ENCODE measurements at regions of chr12 and their contacts with region 1.

Region 1: GRCh38 chr12:1795785-1796514 is 24.4 kb upstream of the LRTM2 start:
- DNase-seq: peak; percentile 95
- H3K4me3 Mint-ChIP-seq: peak overlapping the region; percentile 82
- H3K27ac Mint-ChIP-seq: peak overlapping the region; percentile 79
- H3K4me1 Mint-ChIP-seq: peaks cover 18% of the 10 kb centered on the region
- H3K27me3 Mint-ChIP-seq: no peaks in the 10 kb centered on the region

Region 2: DNA sequence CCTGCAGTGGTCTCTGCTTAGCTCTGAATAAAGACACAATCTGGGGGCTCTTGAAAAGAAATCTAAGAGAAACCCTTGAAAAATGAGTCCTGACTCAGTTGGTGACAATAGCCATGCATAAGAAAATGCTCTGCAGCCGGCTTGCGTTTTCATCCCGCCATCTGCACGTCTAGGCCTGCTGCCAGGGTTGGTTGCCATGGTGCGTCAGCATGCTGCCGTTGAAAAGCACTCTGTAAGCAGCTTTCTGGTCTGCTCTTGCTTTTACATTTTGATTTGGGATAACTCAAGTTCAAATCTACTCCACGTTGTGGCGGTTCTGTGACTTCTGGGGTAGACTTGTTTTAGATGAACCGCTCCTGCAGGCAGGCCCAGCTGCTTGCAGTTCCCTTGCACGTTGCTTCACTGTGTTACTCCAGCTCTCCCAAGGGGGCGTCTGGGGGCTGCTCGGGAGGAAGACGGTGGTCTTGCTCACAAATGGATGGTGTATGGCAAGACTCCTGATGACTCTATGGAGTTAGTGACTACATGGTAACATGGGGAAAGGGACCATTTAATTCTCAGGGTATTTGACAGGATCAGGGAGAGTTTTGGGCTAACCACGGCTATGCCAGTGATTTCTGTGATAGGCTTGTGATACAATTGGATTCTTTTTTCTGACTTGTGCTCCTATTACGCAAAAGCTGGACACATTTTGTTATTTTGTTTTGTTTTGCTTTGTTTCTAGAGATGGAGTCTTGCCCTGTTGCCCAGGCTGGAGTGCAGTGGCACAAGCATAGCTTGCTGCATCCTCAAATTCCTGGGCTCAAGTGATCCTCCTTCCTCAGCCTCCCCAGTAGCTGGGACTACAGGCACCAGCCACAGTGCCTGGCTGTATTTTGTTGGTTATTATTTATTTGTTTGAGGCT is 151.2 kb before region 1 on chr12:
- CTCF ChIA-PET with region 1: interaction called, 282 read pairs
- POLR2A ChIA-PET with region 1: interaction called, 5 read pairs
- DNase-seq: no peak
- H3K4me3 Mint-ChIP-seq: no peak overlapping the region
- H3K27ac Mint-ChIP-seq: no peak overlapping the region
- H3K4me1 Mint-ChIP-seq: peaks cover 32% of the 10 kb centered on the region
- H3K27me3 Mint-ChIP-seq: peaks cover 19% of the 10 kb centered on the region

Region 3: DNA sequence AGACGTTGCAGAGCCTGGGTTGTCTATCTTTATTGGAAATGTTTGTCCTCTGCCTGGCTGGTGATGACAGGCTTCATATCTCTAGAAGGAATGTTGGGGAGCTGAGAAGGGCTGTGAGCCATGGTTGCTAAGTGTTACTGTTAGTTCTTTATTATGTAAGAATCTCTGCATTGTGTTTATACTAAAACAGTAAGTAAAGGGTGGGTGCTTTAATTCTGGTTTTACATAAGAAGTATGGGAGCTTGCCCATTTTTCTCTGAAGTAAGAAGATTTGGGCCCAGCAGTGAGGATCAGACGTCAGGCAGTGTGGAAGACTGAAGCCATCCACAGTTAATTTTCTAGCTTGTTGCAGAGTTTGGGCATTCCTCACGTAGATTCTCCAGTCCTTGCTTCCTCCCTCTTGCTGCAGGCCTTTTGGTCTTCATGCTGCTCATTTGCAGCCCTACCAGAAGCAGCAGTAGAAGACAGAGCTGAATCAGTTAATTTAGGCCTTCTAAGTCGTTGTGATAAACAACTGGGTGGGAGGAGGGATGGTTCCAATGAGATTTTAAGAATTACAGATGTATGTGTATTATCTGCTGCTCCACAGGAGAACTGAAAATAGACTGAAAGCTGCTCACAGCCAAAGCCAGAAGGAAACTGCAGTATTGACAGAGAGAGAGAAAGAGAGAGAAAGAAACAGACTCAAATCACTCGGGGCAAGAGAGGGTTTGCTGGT is 145.5 kb before region 1 on chr12:
- CTCF ChIA-PET with region 1: interaction called, 282 read pairs
- POLR2A ChIA-PET with region 1: interaction called, 26 read pairs
- DNase-seq: no peak
- H3K4me3 Mint-ChIP-seq: no peak overlapping the region
- H3K27ac Mint-ChIP-seq: no peak overlapping the region
- H3K4me1 Mint-ChIP-seq: peaks cover 8% of the 10 kb centered on the region
- H3K27me3 Mint-ChIP-seq: peaks cover 43% of the 10 kb centered on the region

Region 4: DNA sequence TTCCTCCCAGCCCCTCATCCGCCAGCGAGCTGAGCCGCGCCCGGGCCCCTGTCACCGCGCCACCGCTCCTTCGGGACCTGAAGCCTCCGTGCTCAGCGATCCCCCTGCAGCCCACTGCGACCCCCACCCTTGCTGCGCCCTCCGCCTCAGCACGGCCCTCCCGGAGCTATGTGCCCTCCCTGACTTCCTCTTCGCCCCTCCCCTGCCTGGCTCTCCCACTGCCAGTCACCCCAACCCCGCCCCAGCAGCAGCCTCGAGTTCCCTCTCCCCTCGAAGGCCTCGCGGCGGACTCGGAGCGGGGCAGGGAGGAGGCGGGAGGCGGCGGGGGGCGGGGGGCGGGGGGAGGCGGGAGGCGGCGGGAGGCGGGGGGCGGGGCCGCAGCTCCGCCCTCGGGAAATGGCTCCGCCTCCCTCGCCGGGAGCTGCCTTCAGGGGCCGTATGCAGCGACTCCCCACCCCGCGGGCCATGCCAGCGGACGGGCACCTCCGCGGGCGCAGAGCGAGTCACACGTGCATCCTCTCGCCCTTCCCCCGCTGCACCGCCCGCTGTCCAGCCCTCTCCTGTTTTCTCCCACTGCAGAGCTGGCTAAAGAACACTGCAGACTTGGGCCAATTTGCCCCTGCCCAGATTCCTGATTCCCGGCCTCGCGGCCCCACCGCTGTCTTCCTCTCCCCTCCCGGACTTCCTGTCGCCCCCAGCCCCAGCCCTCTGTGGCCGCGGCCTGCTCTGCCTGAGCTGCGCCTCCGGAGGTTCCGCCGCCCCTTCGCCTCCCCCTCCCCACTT is 134.2 kb before region 1 on chr12:
- CTCF ChIA-PET with region 1: interaction called, 282 read pairs
- POLR2A ChIA-PET with region 1: interaction called, 17 read pairs
- DNase-seq: peak; percentile 89
- H3K4me3 Mint-ChIP-seq: peak overlapping the region; percentile 64
- H3K27ac Mint-ChIP-seq: peak overlapping the region; percentile 58
- H3K4me1 Mint-ChIP-seq: peaks cover 36% of the 10 kb centered on the region
- H3K27me3 Mint-ChIP-seq: peaks cover 2% of the 10 kb centered on the region

Region 5: DNA sequence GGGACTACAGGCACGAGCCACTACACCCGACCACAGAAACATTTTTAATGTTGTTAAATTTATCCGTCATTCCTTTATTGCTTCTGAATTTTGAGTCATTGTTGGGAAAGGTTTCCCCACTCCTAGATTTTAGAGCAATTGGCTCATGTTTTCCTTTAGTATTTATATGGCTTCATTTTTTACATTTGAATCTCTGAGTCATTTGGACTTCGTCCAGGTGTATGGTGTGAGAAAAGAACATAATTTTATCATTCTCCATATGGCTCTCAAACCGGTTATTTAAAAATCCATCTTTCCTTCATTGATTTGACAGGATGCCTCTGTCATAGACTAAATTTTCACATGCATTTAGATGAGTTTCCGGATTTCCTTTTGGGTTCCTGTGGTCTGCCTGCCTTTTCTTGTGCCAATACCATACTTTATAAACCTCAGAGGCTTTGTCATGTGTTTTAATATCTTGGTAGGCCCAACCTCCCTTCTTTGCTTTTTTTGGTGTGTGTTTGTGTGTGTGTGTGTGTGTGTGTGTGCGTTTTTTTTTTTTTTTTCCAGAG is 55.3 kb after region 1 on chr12:
- CTCF ChIA-PET with region 1: no interaction called
- POLR2A ChIA-PET with region 1: no interaction called
- DNase-seq: no peak
- H3K4me3 Mint-ChIP-seq: no peak overlapping the region
- H3K27ac Mint-ChIP-seq: no peak overlapping the region
- H3K4me1 Mint-ChIP-seq: peaks cover 7% of the 10 kb centered on the region
- H3K27me3 Mint-ChIP-seq: peaks cover 6% of the 10 kb centered on the region

Region 6: DNA sequence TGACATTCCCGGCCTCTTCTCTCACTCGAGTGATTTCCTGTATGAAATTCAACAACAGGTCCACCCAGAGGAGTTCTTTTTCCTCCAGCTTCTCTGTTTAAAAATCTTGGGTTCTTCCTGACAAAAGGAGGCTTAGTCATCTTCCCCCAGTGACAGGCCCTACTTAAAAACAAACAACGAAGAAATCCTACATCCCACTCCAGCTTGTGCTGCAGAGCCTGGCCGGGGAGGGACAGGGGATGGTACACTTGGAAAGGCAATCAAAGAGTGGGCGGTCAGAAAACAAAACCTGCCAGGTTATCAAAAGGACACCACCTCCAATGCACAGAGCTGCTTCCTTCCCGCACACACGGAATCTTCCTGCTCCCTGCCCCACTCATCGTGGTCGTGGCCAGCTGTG is 358.1 kb after region 1 on chr12:
- CTCF ChIA-PET with region 1: no interaction called
- POLR2A ChIA-PET with region 1: no interaction called
- DNase-seq: no peak
- H3K4me3 Mint-ChIP-seq: no peak overlapping the region
- H3K27ac Mint-ChIP-seq: no peak overlapping the region
- H3K4me1 Mint-ChIP-seq: peaks cover 8% of the 10 kb centered on the region
- H3K27me3 Mint-ChIP-seq: peaks cover 26% of the 10 kb centered on the region

Measured in activated CD4-positive, alpha-beta memory T cell treated with anti-CD3 and anti-CD28 coated beads, Interleukin-2, amount 10 ng/mL, durations not matched to agents 7 days and 5 days (primary cell).